ENCODE measurements at regions of chr9 and their contacts with region 1.

Region 1: DNA sequence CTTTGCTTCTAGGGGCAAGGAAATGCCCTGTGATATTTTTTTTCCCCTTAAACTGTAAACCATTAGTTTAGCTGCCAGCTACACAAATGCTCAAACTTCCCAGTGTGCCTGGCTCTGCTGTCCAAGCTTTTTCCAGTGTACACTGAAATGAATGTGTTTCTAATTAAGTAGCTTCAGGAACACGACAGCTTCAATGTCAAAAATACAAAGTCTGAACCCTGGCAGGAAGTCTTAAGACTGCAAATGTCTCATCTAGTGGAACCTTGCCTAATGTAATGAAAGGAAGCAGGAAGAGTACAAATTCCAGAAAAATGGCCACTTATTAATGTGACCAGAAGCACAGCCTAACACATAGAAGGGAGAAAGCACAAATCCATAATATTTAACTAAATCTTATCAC is 255.2 kb downstream of the CRB2 start:
- DNase-seq: no peak
- H3K4me3 ChIP-seq: no peak overlapping the region
- H3K27ac ChIP-seq: no peak overlapping the region
- H3K4me1 ChIP-seq: no peaks in the 10 kb centered on the region
- H3K27me3 ChIP-seq: no peaks in the 10 kb centered on the region
- CTCF ChIP-seq: no peak
- POLR2A ChIP-seq: no peak

Region 2: GRCh38 chr9:123679322-123679987 is 68.2 kb after region 1 on chr9:
- intact Hi-C with region 1: loop called (anchors 10 kb)
- DNase-seq: no peak
- H3K4me3 ChIP-seq: no peak overlapping the region
- H3K27ac ChIP-seq: no peak overlapping the region
- H3K4me1 ChIP-seq: no peaks in the 10 kb centered on the region
- H3K27me3 ChIP-seq: no peaks in the 10 kb centered on the region
- CTCF ChIP-seq: no peak
- POLR2A ChIP-seq: no peak

Region 3: GRCh38 chr9:123710299-123710698 is 99.1 kb after region 1 on chr9:
- intact Hi-C with region 1: no loop called
- DNase-seq: no peak
- H3K4me3 ChIP-seq: no peak overlapping the region
- H3K27ac ChIP-seq: no peak overlapping the region
- H3K4me1 ChIP-seq: no peaks in the 10 kb centered on the region
- H3K27me3 ChIP-seq: no peaks in the 10 kb centered on the region
- CTCF ChIP-seq: no peak
- POLR2A ChIP-seq: no peak

Measured in uterus (tissue), 4 donors.